ENCODE measurements at regions of chr5 and their contacts with region 1.

Region 1: DNA sequence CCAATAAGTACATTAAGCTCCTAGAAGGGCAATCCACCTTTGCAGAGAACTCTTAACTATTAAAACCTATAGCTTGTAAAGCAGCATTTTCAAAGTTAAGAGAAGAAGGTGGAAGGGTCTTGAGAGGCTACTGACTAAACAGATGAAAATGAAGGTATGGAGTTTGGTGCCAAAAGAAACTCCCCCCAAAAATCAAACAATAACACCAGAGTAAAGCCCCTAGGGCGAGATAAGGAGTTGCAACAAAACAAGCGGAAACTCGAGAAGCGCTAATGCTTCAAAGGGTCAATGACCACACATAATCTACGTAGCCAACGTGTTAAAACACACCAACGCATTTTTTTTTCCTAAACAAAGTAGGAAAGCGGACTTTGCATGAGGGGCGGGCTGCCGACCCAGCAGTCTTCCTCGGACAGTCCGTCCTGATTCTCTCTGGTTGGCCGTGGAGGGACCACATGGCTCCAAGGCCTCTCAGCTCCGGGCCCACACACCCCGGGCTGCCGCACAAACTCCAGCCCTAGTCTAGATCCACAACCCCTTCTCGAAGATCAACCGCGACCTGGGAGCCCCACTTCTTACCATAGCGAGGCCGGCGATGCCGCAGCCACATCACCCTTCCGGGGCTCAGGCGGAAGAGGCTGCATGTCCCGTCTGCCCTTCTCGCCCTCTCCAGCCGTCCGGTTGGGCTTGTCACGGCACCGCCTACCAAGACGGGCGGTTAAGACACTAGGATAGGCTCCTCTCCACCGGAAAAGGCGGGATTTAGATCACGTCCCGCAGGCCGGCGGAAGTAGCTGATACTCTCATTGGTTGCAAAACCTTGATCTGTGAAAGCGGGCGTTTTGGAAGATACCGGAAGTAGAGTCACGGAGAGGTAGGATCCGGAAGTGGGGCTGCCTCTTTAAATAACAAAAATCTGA is at the starts of genes TMEM167A and XRCC4:
- DNase-seq: peak; percentile 80
- ATAC-seq: peak; percentile 99
- H3K4me3 Mint-ChIP-seq: peak within 1 kb of the TSS; percentile 100
- H3K27ac Mint-ChIP-seq: peak within 1 kb of the TSS; percentile 99
- H3K4me1 Mint-ChIP-seq: peaks cover 40% of the 10 kb centered on the region
- H3K27me3 Mint-ChIP-seq: no peaks in the 10 kb centered on the region
- CTCF ChIP-seq: no peak
- total RNA-seq, gene TMEM167A: 45.1 and 50.3 TPM in 2 replicates
- total RNA-seq, gene XRCC4: 8.1 and 8.5 TPM in 2 replicates

Region 2: DNA sequence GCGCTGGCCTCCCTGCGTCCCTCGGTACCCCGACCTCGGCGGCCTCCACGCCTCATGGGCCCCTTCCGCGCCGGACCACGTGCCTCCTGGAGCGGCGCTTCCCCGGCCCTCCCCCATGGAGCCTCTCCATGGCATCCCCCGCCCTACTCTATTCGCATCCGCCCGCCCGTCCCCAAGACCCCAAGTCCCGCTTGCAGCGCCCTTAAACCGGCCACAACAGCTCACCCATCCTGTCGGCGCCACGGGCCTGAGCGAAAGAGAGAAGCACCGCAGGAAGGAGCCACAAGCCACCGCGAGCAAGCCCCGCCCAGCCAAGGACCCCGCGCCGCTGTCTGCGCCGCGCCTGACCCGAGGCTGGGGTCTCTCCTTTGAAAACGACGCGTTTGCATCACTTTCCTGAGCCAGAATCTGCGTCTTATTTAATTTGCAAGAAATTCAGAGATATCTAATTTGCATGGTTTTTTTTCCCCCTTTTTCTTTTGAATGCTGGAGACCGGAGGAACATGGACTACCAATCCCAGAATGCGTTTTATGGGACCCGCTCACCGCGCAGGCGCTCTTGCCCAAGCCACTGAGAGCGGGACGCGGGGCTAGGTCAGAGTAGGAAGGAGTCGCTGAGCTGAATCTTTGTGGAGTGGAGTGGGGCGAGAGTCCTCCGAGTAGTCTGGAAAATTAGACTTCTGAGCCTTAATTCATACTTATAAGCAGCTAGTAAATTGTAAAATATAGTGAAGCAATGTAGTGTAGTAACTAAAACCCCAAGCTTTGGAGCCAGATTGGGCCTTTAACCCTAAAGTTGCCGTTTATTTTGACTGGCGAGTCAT is 798.7 kb before region 1 on chr5 and contains the start of gene RPS23:
- CTCF ChIA-PET with region 1: no interaction called
- POLR2A ChIA-PET with region 1: interaction called, 5 read pairs
- intact Hi-C with region 1: loop called (anchors 1 kb)
- DNase-seq: peak; percentile 79
- ATAC-seq: peak; percentile 92
- H3K4me3 Mint-ChIP-seq: peak within 1 kb of the TSS; percentile 96
- H3K27ac Mint-ChIP-seq: peak within 1 kb of the TSS; percentile 99
- H3K4me1 Mint-ChIP-seq: peaks cover 44% of the 10 kb centered on the region
- H3K27me3 Mint-ChIP-seq: no peaks in the 10 kb centered on the region
- CTCF ChIP-seq: no peak
- total RNA-seq, gene RPS23: 4,125 and 4,753 TPM in 2 replicates

Region 3: DNA sequence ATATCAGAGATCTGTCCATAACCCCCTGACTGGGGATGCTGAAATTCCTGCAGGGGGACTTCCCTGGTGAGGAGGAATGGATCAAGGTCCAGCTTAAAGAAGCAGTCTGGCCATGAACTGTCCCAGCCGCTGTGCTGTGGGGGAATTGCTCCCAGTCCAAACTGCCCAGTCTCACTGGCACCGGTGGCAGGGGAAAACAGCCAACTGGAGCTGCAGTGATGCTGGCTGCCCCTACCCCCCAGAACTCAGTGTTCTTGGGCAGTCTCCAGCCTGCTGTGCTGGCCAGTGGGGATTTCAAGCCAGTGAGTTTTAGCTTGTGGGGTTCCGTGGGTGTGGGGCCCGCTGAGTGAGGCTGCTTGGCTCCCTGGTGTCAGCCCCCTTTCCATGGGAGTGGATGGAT is 492.4 kb before region 1 on chr5:
- CTCF ChIA-PET with region 1: no interaction called
- POLR2A ChIA-PET with region 1: no interaction called
- intact Hi-C with region 1: no loop called
- DNase-seq: no peak
- ATAC-seq: no peak
- H3K4me3 Mint-ChIP-seq: no peak overlapping the region
- H3K27ac Mint-ChIP-seq: no peak overlapping the region
- H3K4me1 Mint-ChIP-seq: no peaks in the 10 kb centered on the region
- H3K27me3 Mint-ChIP-seq: no peaks in the 10 kb centered on the region
- CTCF ChIP-seq: no peak

Region 4: GRCh38 chr5:82597437-82597836 is 479.6 kb before region 1 on chr5:
- CTCF ChIA-PET with region 1: no interaction called
- POLR2A ChIA-PET with region 1: no interaction called
- intact Hi-C with region 1: no loop called
- DNase-seq: no peak
- ATAC-seq: no peak
- H3K4me3 Mint-ChIP-seq: no peak overlapping the region
- H3K27ac Mint-ChIP-seq: no peak overlapping the region
- H3K4me1 Mint-ChIP-seq: no peaks in the 10 kb centered on the region
- H3K27me3 Mint-ChIP-seq: no peaks in the 10 kb centered on the region
- CTCF ChIP-seq: no peak

Region 5: GRCh38 chr5:82812575-82812974 is 264.4 kb before region 1 on chr5:
- CTCF ChIA-PET with region 1: no interaction called
- POLR2A ChIA-PET with region 1: no interaction called
- intact Hi-C with region 1: loop called (anchors 10 kb)
- DNase-seq: no peak
- ATAC-seq: no peak
- H3K4me3 Mint-ChIP-seq: no peak overlapping the region
- H3K27ac Mint-ChIP-seq: no peak overlapping the region
- H3K4me1 Mint-ChIP-seq: no peaks in the 10 kb centered on the region
- H3K27me3 Mint-ChIP-seq: no peaks in the 10 kb centered on the region
- CTCF ChIP-seq: no peak

Region 6: DNA sequence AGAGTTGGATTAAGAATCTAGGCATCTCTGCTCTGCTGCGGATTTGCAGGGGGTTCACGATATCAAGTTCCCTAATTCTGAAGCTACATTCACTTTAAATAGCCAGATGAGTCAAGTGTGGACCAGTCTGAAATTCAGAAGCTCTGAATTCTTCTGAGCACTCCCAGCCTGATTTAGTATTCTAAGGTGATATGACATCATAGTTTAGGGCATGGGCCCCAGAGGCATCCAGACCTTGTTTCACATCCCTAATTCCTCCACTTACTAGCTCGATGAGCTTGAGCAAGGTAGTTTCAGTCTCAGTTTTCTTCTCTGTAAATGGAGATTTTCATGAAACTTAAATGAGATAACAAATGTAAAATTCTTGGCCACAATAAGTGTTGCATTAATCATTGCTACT is 65.0 kb before region 1 on chr5:
- CTCF ChIA-PET with region 1: no interaction called
- POLR2A ChIA-PET with region 1: interaction called, 18 read pairs
- intact Hi-C with region 1: loop called (anchors 1 kb)
- DNase-seq: no peak
- ATAC-seq: peak; percentile 97
- H3K4me3 Mint-ChIP-seq: peak overlapping the region; percentile 56
- H3K27ac Mint-ChIP-seq: peak overlapping the region; percentile 68
- H3K4me1 Mint-ChIP-seq: peaks cover 18% of the 10 kb centered on the region
- H3K27me3 Mint-ChIP-seq: no peaks in the 10 kb centered on the region
- CTCF ChIP-seq: no peak

Region 7: GRCh38 chr5:83066548-83067110 is 10.4 kb before region 1 on chr5:
- CTCF ChIA-PET with region 1: interaction called, 3 read pairs
- POLR2A ChIA-PET with region 1: no interaction called
- intact Hi-C with region 1: loop called (anchors 1 kb)
- DNase-seq: no peak
- ATAC-seq: no peak
- H3K4me3 Mint-ChIP-seq: no peak overlapping the region
- H3K27ac Mint-ChIP-seq: no peak overlapping the region
- H3K4me1 Mint-ChIP-seq: peaks cover 21% of the 10 kb centered on the region
- H3K27me3 Mint-ChIP-seq: no peaks in the 10 kb centered on the region
- CTCF ChIP-seq: no peak

Region 8: DNA sequence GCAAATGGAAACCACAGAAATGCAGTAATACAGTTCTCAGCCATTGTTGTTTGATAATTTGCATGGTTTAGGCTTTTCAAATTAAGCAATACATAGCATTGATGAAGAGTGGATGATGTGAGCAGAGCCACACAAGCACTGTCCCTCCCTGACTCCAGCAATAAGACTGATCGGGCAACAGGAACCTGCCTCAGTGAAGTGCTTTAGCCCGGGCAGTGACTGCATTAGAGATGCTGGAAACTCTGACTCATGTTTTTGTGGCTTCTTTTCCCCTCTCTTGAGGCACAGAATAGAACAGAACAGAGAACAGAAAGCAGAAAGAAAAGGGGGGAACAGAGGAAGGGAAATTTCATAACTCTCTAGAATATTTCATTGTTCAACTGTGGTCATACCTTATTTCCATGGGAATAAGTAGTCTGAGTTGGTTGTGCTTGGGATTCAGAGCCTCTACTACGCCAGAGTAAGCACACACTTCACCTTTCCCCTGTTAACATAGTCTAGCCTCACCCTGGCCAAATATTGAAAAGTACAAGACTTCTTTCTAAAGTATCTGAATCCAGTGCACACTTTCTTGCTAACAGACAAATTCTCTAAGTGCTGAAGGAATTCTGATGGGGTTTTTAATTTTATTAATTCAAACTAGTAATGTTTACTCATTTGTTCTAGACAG is 229.7 kb after region 1 on chr5:
- CTCF ChIA-PET with region 1: no interaction called
- POLR2A ChIA-PET with region 1: no interaction called
- intact Hi-C with region 1: loop called (anchors 2 kb)
- DNase-seq: no peak
- ATAC-seq: peak; percentile 94
- H3K4me3 Mint-ChIP-seq: no peak overlapping the region
- H3K27ac Mint-ChIP-seq: no peak overlapping the region
- H3K4me1 Mint-ChIP-seq: peaks cover 12% of the 10 kb centered on the region
- H3K27me3 Mint-ChIP-seq: no peaks in the 10 kb centered on the region
- CTCF ChIP-seq: no peak

Region 9: DNA sequence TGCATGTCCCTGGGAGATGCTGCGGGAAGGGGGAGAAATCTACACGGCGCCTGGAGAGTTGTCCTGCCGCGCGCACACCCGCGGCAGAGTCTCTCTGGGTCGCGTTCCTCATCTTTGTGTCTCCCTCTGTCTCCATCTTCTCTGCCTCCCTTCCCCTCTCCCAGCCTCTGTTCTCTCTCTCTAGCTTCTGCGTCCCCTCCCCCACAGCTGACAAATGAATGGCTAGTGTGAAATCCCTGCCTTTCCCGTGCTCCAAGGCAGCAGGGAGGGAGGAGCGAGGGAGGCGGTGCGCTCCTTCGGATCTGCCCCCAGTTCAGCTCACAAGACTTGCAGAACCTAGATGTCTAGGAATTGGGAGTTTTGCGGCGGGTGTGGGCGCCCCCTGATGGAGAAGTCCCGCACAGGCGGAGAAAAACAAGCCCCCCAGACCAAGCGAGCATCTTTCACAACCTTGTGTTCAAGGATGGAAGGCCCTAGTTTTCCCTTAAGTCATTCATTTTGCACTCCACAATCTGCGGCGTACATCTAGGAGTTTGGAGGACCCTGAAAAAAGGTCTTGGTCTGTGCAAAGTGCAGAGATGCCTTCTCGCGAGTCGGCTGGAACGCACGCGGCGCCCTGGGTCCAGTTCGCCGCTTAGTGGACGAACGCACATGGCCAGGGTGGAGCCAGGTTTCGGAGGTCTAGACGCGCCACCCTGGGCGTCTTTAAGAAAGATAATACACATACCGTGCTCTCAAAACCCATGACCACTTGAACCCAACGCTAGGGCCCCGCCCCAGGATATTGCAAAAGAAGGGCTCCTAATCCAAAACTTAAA is 396.6 kb after region 1 on chr5:
- CTCF ChIA-PET with region 1: no interaction called
- POLR2A ChIA-PET with region 1: no interaction called
- intact Hi-C with region 1: loop called (anchors 5 kb)
- DNase-seq: peak; percentile 33
- ATAC-seq: peak; percentile 56
- H3K4me3 Mint-ChIP-seq: peak overlapping the region; percentile 76
- H3K27ac Mint-ChIP-seq: no peak overlapping the region
- H3K4me1 Mint-ChIP-seq: peaks cover 38% of the 10 kb centered on the region
- H3K27me3 Mint-ChIP-seq: peaks cover 58% of the 10 kb centered on the region
- CTCF ChIP-seq: no peak

Measured in activated B cell treated with CpG ODN at 0.5 μM for 24 hours (primary cell).